B cell (primary cell): ENCODE measurements at regions of chr2 and their contacts with region 1.

Region 1: DNA sequence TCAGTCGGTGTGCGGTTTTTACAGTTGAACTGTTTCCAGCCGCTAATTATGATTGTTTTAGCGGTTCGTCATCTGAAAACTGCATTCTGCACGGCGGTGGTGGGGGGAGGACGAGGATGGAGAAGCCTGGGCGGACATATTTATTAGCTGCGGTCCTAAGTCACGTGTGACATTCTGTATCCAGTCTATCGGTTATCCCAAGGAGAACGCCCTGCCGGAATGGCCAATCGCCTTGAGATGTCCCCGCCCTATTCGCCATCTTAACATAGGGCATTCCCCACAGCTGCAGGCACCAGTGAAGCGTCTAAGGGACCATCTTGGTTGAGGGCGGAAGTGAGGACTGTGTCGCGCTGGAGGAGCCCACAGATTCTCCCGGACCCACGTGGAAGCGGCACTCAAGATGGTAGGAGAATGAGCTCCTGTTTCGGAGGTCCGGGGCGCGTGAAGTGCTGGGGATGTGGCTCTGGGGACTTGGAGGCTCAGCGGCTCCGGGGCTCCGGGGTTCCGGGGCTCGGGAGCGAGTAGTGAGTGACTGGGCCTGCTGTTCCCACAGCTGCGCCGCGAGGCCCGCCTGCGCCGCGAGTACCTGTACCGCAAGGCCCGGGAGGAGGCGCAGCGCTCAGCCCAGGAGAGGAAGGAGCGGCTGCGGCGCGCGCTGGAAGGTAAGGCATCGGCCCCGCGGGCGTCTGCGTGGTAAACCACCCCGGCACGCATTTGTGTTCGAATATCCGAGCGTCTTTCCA is at the start of gene IMP4:
- DNase-seq: peak; percentile 98
- ATAC-seq: peak; percentile 83
- H3K4me3 ChIP-seq: peak within 1 kb of the TSS; percentile 87 to 99 (median 89)
- H3K4me3 Mint-ChIP-seq: peak within 1 kb of the TSS; percentile 100
- H3K27ac ChIP-seq: peak within 1 kb of the TSS; percentile 90 to 97
- H3K27ac Mint-ChIP-seq: peak within 1 kb of the TSS; percentile 99
- H3K4me1 ChIP-seq: peaks cover 12 to 30% of the 10 kb centered on the region in 2 donors
- H3K4me1 Mint-ChIP-seq: peaks cover 53% of the 10 kb centered on the region
- H3K27me3 ChIP-seq: no peaks in the 10 kb centered on the region
- H3K27me3 Mint-ChIP-seq: no peaks in the 10 kb centered on the region
- CTCF ChIP-seq: peak; percentile 53
- total RNA-seq, gene IMP4: 91.5 and 102 TPM in 2 replicates

Region 2: GRCh38 chr2:129877289-129877779 is 465.4 kb before region 1 on chr2:
- CTCF ChIA-PET with region 1: no interaction called
- POLR2A ChIA-PET with region 1: interaction called, 5 read pairs
- intact Hi-C with region 1: loop called (anchors 5 kb)
- DNase-seq: peak; percentile 92
- ATAC-seq: peak; percentile 95
- H3K4me3 ChIP-seq: peak overlapping the region; percentile 88 to 94 (median 93)
- H3K4me3 Mint-ChIP-seq: peak overlapping the region; percentile 97
- H3K27ac ChIP-seq: peak overlapping the region; percentile 54 to 78
- H3K27ac Mint-ChIP-seq: peak overlapping the region; percentile 92
- H3K4me1 ChIP-seq: peaks cover 7 to 15% of the 10 kb centered on the region in 2 donors
- H3K4me1 Mint-ChIP-seq: peaks cover 13% of the 10 kb centered on the region
- H3K27me3 ChIP-seq: no peaks in the 10 kb centered on the region
- H3K27me3 Mint-ChIP-seq: peaks cover 4% of the 10 kb centered on the region
- CTCF ChIP-seq: no peak

Region 3: DNA sequence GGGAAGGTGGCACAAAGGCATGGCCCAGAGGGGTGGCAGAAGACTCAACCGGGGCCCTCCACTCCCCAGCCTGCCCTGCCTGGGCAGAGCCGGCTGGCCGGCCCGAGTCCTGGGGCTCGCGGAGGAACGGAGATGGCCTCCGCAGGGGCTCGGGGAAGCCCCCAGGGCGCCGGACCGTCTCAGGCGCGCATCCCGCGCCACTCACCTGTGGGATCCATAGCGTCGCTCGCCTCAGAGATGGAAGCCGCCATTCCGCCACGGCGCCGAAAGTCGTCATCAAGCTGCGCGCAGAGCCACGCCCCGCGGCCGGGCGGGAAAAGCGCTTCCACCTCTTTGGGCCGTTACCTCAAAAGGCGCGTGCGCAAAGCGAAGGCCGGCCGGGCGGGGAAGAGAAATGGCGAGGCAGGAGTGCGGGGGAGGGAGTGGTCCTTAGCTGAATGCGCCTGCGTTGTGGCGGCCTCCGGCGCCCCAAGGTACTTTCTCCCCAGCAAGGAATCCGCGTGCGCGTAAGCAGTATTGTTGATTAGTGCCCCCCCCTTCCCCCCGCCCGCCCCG is 161.3 kb before region 1 on chr2 and contains the start of gene SMPD4:
- CTCF ChIA-PET with region 1: interaction called, 21 read pairs
- POLR2A ChIA-PET with region 1: interaction called, 32 read pairs
- intact Hi-C with region 1: loop called (anchors 1 kb)
- DNase-seq: peak; percentile 98
- ATAC-seq: peak; percentile 72
- H3K4me3 ChIP-seq: peak within 1 kb of the TSS; percentile 38 to 90 (median 80)
- H3K4me3 Mint-ChIP-seq: peak within 1 kb of the TSS; percentile 92
- H3K27ac ChIP-seq: peak within 1 kb of the TSS; percentile 85 to 91
- H3K27ac Mint-ChIP-seq: peak within 1 kb of the TSS; percentile 97
- H3K4me1 ChIP-seq: peaks cover 14 to 21% of the 10 kb centered on the region in 2 donors
- H3K4me1 Mint-ChIP-seq: peaks cover 24% of the 10 kb centered on the region
- H3K27me3 ChIP-seq: no peaks in the 10 kb centered on the region
- H3K27me3 Mint-ChIP-seq: no peaks in the 10 kb centered on the region
- CTCF ChIP-seq: no peak
- total RNA-seq, gene SMPD4: 63.8 and 67.5 TPM in 2 replicates

Region 4: DNA sequence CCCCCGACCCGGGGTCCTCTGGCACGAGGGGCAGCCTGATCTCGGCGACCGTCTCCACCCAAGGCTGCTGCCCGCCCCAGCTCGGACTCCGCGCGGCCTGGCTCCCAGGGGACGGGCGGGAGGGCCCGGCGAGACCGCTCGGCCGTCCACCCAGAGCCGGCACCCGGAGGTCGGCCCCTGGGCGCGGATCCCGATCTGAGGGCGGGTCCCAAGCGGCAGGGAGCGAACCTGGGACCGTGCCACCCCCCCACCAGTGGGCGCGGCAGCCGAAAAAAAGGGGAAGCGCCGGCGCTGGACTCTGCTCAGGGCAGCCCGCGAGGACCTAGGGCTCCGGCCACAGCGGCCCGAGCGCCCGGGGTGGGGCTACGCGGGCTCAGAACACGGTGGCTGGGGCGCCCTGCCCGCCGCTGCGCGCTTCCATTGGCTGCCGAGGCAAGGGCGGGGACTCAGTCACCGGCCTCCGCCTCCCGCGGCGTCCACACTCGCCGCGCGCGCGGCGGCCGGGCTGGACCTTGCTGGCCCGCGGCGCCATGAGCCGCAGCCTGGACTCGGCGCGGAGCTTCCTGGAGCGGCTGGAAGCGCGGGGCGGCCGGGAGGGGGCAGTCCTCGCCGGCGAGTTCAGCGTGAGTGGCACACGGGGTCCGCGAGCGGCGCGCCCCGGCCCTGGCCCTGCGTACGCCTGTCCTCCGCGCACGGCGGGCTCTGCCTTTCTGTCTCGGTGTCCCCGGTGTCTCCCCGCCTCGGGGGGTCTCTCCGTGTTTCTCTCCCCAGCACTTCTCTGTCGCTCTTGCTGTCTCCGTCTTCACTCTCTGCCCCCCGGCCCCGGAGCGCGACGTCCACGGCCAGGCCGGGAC is 13.1 kb after region 1 on chr2 and contains the start of gene PTPN18:
- CTCF ChIA-PET with region 1: interaction called, 31 read pairs
- POLR2A ChIA-PET with region 1: interaction called, 12 read pairs
- intact Hi-C with region 1: loop called (anchors 1 kb)
- DNase-seq: peak; percentile 72
- ATAC-seq: peak; percentile 93
- H3K4me3 ChIP-seq: peak within 1 kb of the TSS in 4 of 5 experiments; percentile 50 to 73 (median 69)
- H3K4me3 Mint-ChIP-seq: peak within 1 kb of the TSS; percentile 86
- H3K27ac ChIP-seq: no peak within 1 kb of the TSS
- H3K27ac Mint-ChIP-seq: peak within 1 kb of the TSS; percentile 48
- H3K4me1 ChIP-seq: peaks cover 9 to 31% of the 10 kb centered on the region in 2 donors
- H3K4me1 Mint-ChIP-seq: peaks cover 33% of the 10 kb centered on the region
- H3K27me3 ChIP-seq: peaks cover 0 to 7% (median 3%) of the 10 kb centered on the region in 4 experiments
- H3K27me3 Mint-ChIP-seq: no peaks in the 10 kb centered on the region
- CTCF ChIP-seq: peak; percentile 70
- total RNA-seq, gene PTPN18: 101 and 102 TPM in 2 replicates

Region 5: DNA sequence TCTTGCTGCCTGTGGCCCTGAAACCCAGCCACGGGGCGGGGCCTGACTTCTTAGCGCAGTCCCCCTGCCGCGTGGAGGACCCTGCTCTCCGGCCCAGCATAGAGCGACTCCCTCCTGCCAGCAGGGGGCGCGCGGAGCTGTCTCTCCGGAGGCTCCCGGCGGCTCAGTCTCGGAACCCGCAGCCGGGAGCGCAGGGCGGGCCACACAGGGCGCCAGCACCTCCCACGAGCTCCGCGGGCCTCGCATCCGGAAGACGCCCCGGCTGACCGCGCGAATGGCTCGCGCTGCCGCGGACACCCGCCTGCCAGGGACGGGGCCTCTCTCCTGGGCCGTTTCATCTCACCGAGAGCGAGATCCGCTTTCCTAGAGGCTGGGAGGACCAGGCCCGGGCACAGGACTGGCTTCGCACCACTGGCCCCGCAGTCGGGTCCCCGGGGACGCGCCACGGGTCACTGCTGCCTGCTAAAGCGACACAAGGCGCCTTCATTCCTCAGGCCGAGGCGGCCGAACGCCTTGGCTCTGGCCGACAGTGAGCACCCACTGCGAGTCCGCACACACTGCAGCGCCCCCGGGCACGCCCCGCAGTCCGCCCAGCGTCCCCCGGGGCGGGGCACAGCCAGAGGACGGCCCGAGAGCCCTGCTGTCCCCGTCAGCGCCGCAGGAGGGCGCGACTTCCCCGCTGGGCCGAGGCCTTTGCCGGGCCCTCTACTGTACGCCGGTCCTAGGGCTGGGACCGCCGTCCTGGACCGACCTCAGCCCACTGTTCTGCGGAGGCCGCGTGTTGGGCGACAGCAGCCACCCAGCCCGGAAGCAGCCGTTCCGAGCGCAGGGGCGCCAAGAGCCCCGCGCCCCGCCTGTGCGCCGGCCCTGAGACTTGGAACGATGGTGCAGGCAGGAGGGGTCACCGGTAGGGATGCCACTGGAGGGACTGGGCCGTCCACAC is 455.1 kb after region 1 on chr2:
- CTCF ChIA-PET with region 1: interaction called, 3 read pairs
- POLR2A ChIA-PET with region 1: no interaction called
- intact Hi-C with region 1: loop called (anchors 2 kb)
- DNase-seq: peak; percentile 90
- ATAC-seq: peak; percentile 93
- H3K4me3 ChIP-seq: peak overlapping the region; percentile 30 to 92 (median 82)
- H3K4me3 Mint-ChIP-seq: peak overlapping the region; percentile 81
- H3K27ac ChIP-seq: peak overlapping the region; percentile 64 to 65
- H3K27ac Mint-ChIP-seq: peak overlapping the region; percentile 41
- H3K4me1 ChIP-seq: peaks cover 7 to 14% of the 10 kb centered on the region in 2 donors
- H3K4me1 Mint-ChIP-seq: peaks cover 5% of the 10 kb centered on the region
- H3K27me3 ChIP-seq: peaks cover 0 to 5% (median 0%) of the 10 kb centered on the region in 4 experiments
- H3K27me3 Mint-ChIP-seq: peaks cover 4% of the 10 kb centered on the region
- CTCF ChIP-seq: peak; percentile 78

Region 6: GRCh38 chr2:131492418-131493198 is 1149.9 kb after region 1 on chr2:
- CTCF ChIA-PET with region 1: no interaction called
- POLR2A ChIA-PET with region 1: interaction called, 3 read pairs
- intact Hi-C with region 1: loop called (anchors 10 kb)
- DNase-seq: peak; percentile 98
- ATAC-seq: peak; percentile 84
- H3K4me3 ChIP-seq: peak overlapping the region; percentile 25 to 98 (median 84)
- H3K4me3 Mint-ChIP-seq: peak overlapping the region; percentile 94
- H3K27ac ChIP-seq: peak overlapping the region; percentile 80 to 94
- H3K27ac Mint-ChIP-seq: peak overlapping the region; percentile 97
- H3K4me1 ChIP-seq: peaks cover 24 to 29% of the 10 kb centered on the region in 2 donors
- H3K4me1 Mint-ChIP-seq: peaks cover 29% of the 10 kb centered on the region
- H3K27me3 ChIP-seq: no peaks in the 10 kb centered on the region
- H3K27me3 Mint-ChIP-seq: no peaks in the 10 kb centered on the region
- CTCF ChIP-seq: peak; percentile 87